ENCODE measurements at regions of chr16 and their contacts with region 1.

Region 1: GRCh38 chr16:19967561-19968359 is 83.1 kb upstream of the GPRC5B start:
- DNase-seq: no peak
- H3K4me3 ChIP-seq: no peak overlapping the region
- H3K27ac ChIP-seq: no peak overlapping the region
- H3K4me1 ChIP-seq: no peaks in the 10 kb centered on the region
- H3K27me3 ChIP-seq: peaks cover 8% of the 10 kb centered on the region
- CTCF ChIP-seq: no peak
- EP300 ChIP-seq: no peak
- POLR2A ChIP-seq: no peak

Region 2: GRCh38 chr16:19644877-19645276 is 322.9 kb before region 1 on chr16:
- in situ Hi-C with region 1: no loop called
- intact Hi-C with region 1: no loop called
- DNase-seq: no peak
- H3K4me3 ChIP-seq: no peak overlapping the region
- H3K27ac ChIP-seq: peak overlapping the region in 1 of 4 donors; percentile 36
- H3K4me1 ChIP-seq: no peaks in the 10 kb centered on the region
- H3K27me3 ChIP-seq: no peaks in the 10 kb centered on the region
- CTCF ChIP-seq: no peak
- EP300 ChIP-seq: no peak
- POLR2A ChIP-seq: no peak

Region 3: DNA sequence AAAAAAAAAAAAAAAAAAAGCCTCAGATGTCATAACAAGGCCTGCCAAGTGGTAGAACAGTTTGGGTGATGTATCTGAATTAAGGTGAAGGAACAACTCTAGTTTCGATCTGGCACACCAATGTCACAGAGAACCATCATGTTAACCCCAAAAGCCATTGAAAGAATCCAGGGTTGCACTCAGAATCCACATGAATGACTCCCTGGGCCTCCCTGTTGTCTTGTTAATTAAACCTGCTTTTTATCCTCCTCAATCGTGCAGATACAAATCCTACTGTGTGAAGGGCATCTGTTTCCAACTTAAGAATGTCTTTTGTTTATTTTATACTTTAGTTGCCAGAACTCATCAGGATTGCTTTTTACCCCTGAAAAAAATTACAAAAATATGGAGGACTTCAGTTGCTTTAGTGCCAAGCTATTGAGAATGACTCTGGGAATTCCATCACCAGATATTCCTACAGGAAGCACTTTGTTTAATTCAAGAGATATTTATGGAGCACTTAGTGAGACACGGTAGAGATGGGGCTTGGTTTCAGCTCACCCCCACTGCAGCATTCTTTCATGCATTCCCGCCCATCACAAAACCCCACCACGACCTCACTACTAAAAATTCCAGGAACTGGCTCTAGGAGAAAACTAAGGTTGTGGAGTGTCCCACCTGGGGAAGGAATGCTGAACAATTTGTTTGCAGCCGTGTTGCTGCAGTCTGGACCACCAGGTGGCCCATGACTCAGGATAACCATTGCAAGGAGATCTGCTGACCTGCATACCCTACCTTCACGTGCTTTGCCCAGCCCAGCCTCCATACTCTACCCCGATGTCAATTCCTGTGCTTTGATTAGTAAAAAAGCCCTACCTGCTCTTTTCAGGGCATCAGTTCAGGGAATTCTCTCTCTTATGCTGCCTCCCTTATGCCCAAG is 19.3 kb before region 1 on chr16:
- in situ Hi-C with region 1: no loop called
- intact Hi-C with region 1: loop called (anchors 1 kb)
- DNase-seq: no peak
- H3K4me3 ChIP-seq: no peak overlapping the region
- H3K27ac ChIP-seq: no peak overlapping the region
- H3K4me1 ChIP-seq: no peaks in the 10 kb centered on the region
- H3K27me3 ChIP-seq: no peaks in the 10 kb centered on the region
- CTCF ChIP-seq: no peak
- EP300 ChIP-seq: no peak
- POLR2A ChIP-seq: no peak